ENCODE measurements at regions of chr16 and their contacts with region 1.

Region 1: DNA sequence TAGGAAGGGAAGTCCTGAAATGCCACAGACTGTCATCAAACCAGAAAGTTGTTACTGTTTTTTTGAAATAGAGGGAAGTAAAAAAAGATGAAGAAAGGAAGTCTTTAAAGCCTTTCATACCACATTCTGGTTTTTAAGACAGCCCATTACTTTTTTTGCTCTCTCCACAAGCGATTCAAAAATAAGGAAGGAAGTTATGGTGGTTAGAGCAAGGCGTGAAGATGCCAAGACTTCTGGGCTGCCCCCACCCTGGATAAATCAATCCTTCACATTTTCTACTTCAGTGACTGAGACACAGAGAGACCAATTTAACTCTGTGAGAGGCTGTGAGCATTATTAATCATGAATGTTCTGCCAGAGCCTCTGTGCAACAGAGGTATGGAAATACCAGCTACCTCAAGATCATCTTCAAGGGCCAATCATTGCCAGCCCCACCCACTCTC is 82.3 kb upstream of the BCAR1 start:
- DNase-seq: no peak

Region 2: DNA sequence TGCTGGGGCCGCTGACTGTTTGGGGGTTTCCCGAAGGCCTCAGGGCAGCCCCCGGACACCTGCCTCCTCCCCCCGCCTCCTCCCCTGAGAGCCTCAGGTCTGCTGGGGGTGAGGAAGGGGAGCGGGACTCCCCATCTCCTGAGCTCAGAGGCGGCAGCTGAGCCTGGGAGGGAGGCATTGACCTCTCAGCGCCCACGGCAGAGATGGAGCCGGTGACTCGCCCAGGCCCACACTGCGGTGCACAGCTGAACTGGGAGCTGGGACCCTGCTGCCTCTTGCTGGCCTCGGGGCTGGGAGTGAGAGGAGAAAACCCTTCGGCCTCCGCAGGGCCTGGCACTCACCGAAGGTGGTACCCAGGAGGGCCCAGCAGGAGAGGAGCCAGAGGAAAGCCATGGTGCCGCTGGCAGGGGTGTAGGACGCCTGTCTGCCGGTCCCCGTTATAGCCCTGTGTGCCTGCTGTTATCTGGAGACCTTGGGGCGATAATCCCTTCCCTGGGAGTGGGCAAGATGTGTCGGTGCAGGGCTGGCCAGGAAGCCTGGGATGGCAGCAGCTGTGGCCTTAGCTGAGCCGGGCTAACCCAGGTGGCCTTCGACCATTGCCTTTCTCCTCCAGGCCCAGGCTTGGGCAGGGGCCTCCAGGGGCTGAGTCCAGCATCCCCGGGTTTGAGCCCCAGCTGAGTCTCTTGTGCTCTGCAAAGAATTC is 126.8 kb before region 1 on chr16 and contains the start of gene CTRB2:
- intact Hi-C with region 1: no loop called
- DNase-seq: peak; percentile 64
- total RNA-seq, gene CTRB2: 0.79 to 9.1 TPM

Region 3: DNA sequence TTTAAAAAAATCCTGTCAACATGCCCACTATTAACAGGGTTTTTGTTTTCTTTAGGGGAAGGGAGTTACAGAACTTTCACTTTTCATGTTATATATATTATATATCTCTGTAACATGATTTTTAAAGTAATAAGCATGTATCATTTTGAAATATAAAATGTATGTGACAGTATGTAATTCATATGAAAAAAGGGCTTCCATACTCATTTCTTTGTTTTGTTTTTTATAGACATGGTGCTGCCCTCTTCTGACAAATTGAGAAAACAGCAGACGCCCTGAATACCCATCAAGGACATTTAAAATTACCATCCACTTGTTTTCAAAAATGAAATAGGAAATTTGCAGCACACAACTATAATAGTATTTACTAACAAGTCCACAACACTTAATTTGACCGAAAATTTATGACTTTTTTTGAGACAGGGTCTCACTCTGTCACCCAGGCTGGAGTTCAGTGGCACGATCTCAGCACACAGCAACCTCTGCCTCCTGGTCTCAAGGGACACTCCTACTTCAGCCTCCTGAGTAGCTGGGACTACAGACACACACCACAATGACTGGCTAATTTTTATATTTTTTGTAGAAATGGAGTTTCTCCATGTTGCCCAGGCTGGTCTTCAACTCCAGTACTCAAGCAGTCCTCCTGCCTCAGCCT is 69.2 kb after region 1 on chr16:
- intact Hi-C with region 1: loop called in 1 of 2 experiments (anchors 2 kb)
- DNase-seq: no peak